ENCODE measurements at regions of chr20 and their contacts with region 1.

Region 1: DNA sequence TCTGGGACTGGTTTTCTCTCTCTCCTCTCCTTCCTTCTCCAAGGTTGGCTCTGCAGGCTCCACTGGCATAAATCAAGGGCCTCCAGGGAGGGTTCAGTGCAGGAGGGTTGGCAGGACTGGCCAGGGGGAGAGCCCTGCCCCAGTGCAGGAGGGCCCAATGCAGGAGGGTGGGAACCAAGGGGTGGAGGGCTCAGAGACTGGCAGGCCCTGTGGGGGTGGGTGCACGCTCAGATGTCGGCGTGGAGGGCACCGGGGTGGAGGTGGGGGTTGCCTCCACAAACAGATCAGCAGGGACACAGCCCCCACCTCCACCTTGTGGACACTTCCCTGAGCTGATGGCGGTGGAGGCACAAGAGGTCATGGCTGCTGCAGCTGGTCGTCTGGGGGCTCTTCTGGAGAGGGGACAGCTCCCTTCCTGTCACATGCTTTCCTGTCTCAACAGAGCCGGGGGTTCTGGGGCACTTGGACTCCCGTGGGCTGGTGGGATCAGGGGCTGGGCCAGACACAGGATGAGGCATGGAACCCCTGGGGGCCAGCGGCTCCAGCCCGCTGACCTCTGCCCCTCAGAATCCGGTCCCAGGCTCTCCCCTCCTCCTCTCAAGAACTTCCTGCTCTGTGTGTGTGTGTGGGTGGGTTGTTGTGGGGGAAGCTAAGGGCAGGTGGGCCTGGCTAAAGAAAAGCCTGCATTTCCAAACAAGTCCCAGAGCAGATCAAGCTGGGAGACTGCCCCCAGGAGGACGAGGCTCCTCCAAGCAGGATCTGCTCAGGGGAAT is 2.7 kb upstream of the ABHD16B start:
- DNase-seq: no peak
- H3K4me3 ChIP-seq: no peak overlapping the region
- H3K27ac ChIP-seq: peak overlapping the region in 1 of 2 donors; percentile 59
- H3K4me1 ChIP-seq: peaks cover 64% of the 10 kb centered on the region
- H3K27me3 ChIP-seq: no peaks in the 10 kb centered on the region
- CTCF ChIP-seq: peak in 2 of 3 experiments; percentile 18 to 22
- POLR2A ChIP-seq: no peak

Region 2: GRCh38 chr20:63785691-63786131 is 72.9 kb before region 1 on chr20:
- intact Hi-C with region 1: loop called (anchors 5 kb)
- DNase-seq: no peak
- H3K4me3 ChIP-seq: no peak overlapping the region
- H3K27ac ChIP-seq: peak overlapping the region in 1 of 2 donors; percentile 80
- H3K4me1 ChIP-seq: peaks cover 37% of the 10 kb centered on the region
- H3K27me3 ChIP-seq: no peaks in the 10 kb centered on the region
- CTCF ChIP-seq: no peak
- POLR2A ChIP-seq: no peak

Region 3: GRCh38 chr20:63819224-63819921 is 39.2 kb before region 1 on chr20:
- intact Hi-C with region 1: no loop called
- DNase-seq: peak; percentile 55
- H3K4me3 ChIP-seq: no peak overlapping the region
- H3K27ac ChIP-seq: peak overlapping the region; percentile 18 to 23
- H3K4me1 ChIP-seq: peaks cover 6% of the 10 kb centered on the region
- H3K27me3 ChIP-seq: no peaks in the 10 kb centered on the region
- CTCF ChIP-seq: peak in 1 of 3 experiments; percentile 8
- POLR2A ChIP-seq: no peak